Psoas muscle (tissue), 8 donors: ENCODE measurements at regions of chr11 and their contacts with region 1.

Region 1: GRCh38 chr11:8964324-8965320 is at the start of gene TMEM9B:
- DNase-seq: peak; percentile 93 to 95
- ATAC-seq: peak; percentile 93 to 96 (median 94)
- H3K4me3 ChIP-seq: peak within 1 kb of the TSS; percentile 86
- H3K27ac ChIP-seq: peak within 1 kb of the TSS; percentile 98
- H3K4me1 ChIP-seq: peaks cover 34% of the 10 kb centered on the region
- H3K27me3 ChIP-seq: no peaks in the 10 kb centered on the region
- CTCF ChIP-seq: no peak
- total RNA-seq, gene TMEM9B: 32.1 to 54.5 (median 36.0) TPM

Region 2: GRCh38 chr11:8328848-8329330 is 635.7 kb before region 1 on chr11:
- intact Hi-C with region 1: no loop called
- DNase-seq: peak; percentile 80 to 88
- ATAC-seq: peak; percentile 88 to 98 (median 95)
- H3K4me3 ChIP-seq: peak overlapping the region; percentile 51
- H3K27ac ChIP-seq: no peak overlapping the region
- H3K4me1 ChIP-seq: peaks cover 6% of the 10 kb centered on the region
- H3K27me3 ChIP-seq: no peaks in the 10 kb centered on the region
- CTCF ChIP-seq: peak; percentile 69

Region 3: GRCh38 chr11:8682303-8683114 is 282.1 kb before region 1 on chr11 and contains the starts of genes RPL27A and TRIM66:
- intact Hi-C with region 1: loop called (anchors 2 to 5 kb)
- DNase-seq: peak; percentile 99 to 100
- ATAC-seq: peak; percentile 96 to 99 (median 98)
- H3K4me3 ChIP-seq: peak within 1 kb of the TSS; percentile 96
- H3K27ac ChIP-seq: peak within 1 kb of the TSS; percentile 93
- H3K4me1 ChIP-seq: peaks cover 23% of the 10 kb centered on the region
- H3K27me3 ChIP-seq: no peaks in the 10 kb centered on the region
- CTCF ChIP-seq: no peak
- total RNA-seq, gene RPL27A: 308 to 673 (median 565) TPM
- total RNA-seq, gene TRIM66: 2.0 to 3.9 (median 3.5) TPM

Region 4: GRCh38 chr11:8688414-8689362 is 275.9 kb before region 1 on chr11:
- intact Hi-C with region 1: loop called (anchors 2 to 5 kb)
- DNase-seq: peak; percentile 95 to 98
- ATAC-seq: peak; percentile 95 to 98 (median 97)
- H3K4me3 ChIP-seq: peak overlapping the region; percentile 68
- H3K27ac ChIP-seq: peak overlapping the region; percentile 88
- H3K4me1 ChIP-seq: peaks cover 29% of the 10 kb centered on the region
- H3K27me3 ChIP-seq: no peaks in the 10 kb centered on the region
- CTCF ChIP-seq: peak; percentile 24

Region 5: DNA sequence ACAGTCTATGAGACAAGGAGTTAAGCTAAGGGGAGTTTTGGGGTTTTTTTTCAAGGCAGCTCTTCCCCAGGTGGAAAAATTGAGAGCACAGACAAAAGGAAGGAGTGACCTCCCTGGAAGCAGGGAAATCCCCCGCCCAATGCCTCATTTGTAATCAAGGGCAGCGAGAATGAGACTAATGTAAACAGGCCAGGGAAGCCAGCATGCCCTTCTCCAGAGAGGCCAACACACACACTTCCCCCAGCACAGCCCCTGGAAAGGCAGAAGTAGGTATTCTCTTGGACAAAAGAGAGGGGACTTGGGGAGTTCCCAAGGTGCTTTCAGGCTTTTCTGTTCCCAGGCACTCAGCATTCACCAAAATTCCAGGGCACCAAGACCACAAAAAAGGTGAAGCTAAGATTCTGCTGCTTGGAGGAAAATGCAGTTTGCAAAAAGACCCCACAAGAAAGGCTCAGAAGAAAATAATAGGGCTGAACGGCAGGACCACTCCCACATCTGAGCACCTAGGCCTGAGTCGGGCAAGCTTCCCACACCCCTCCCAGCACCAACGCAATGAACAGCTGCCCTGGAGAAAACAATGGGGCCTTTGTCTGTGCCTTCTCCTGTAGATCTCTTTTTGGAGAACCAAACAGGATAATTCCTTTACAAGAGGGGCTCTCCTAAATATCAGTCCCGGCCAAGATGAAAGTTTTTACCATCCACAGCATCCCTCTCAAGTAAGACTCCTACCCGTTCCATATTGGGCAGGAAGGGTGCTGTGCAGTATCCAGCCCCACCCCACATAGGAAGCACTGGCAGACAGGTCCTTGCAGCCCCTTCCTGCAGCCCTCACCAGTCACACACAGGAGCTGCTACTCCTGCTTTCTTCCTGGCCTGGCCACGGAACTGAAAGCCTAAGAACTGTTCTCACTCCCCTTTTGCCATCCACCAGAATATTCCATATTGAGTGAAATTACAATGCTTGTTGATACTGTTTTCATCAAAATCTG is 124.4 kb before region 1 on chr11:
- intact Hi-C with region 1: no loop called
- DNase-seq: no peak
- ATAC-seq: no peak
- H3K4me3 ChIP-seq: no peak overlapping the region
- H3K27ac ChIP-seq: no peak overlapping the region
- H3K4me1 ChIP-seq: no peaks in the 10 kb centered on the region
- H3K27me3 ChIP-seq: no peaks in the 10 kb centered on the region
- CTCF ChIP-seq: no peak

Region 6: DNA sequence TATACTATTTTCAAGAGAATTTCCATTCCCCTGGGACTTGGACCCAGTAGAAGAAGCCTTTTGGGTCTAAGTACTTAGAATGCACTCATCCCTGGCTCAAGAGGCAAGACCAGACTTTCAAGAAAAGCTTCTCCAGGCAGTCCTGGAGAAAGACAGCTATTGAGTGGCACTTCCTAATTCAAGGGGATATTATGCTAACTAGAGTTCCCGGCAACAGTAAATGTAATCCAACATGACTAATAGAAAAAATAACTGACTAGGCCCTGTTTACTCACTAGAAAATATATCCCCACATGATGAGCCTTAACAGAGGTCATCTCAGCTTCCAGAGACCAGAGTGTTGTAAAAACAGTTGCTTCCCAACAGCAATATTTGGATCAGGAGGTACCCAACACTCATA is 100.8 kb before region 1 on chr11:
- intact Hi-C with region 1: no loop called
- DNase-seq: no peak
- ATAC-seq: no peak
- H3K4me3 ChIP-seq: no peak overlapping the region
- H3K27ac ChIP-seq: no peak overlapping the region
- H3K4me1 ChIP-seq: no peaks in the 10 kb centered on the region
- H3K27me3 ChIP-seq: no peaks in the 10 kb centered on the region
- CTCF ChIP-seq: no peak